Pancreas (tissue), 10 donors: ENCODE measurements at regions of chr10 and their contacts with region 1.

Region 1: DNA sequence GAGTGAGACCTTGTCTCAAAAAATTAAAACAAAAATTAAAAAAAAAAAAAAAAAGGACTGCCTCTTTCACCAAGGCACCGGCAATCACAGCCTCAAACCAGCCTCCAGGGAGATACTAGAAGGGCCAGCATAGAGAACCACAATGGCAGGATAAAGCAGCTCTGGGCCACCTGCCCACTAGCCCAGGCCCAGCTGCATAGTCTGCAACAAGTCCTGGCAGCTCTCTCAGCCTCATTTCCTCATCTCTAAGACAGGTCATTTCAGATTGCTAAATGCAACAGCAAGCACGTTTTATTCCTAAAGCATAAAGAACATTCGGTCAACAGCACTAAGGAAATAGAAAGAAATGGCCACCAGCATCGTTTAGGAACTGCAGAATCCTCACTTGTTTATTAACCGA is 28.8 kb downstream of the XPNPEP1 start:
- DNase-seq: peak in 4 of 6 donors; percentile 47 to 65 (median 61)
- ATAC-seq: peak; percentile 71 to 81 (median 74)
- H3K4me3 ChIP-seq: no peak overlapping the region
- H3K27ac ChIP-seq: peak overlapping the region in 2 of 4 donors; percentile 28 to 37
- H3K4me1 ChIP-seq: peaks cover 27 to 62% (median 42%) of the 10 kb centered on the region in 3 donors
- H3K27me3 ChIP-seq: no peaks in the 10 kb centered on the region
- CTCF ChIP-seq: no peak

Region 2: GRCh38 chr10:110016039-110016438 is 121.5 kb after region 1 on chr10:
- intact Hi-C with region 1: loop called in 1 of 3 experiments (anchors 10 kb)
- DNase-seq: peak in 1 of 6 donors; percentile 24
- ATAC-seq: peak; percentile 46 to 76 (median 74)
- H3K4me3 ChIP-seq: no peak overlapping the region
- H3K27ac ChIP-seq: no peak overlapping the region
- H3K4me1 ChIP-seq: peaks cover 10 to 40% (median 29%) of the 10 kb centered on the region in 3 donors
- H3K27me3 ChIP-seq: no peaks in the 10 kb centered on the region
- CTCF ChIP-seq: no peak